GM18951 (cell line): ENCODE measurements at regions of chr1 and their contacts with region 1.

Region 1: GRCh38 chr1:45303582-45304310 is 22.9 kb upstream of the HPDL start:
- POLR2A ChIP-seq: peak; percentile 82

Region 2: DNA sequence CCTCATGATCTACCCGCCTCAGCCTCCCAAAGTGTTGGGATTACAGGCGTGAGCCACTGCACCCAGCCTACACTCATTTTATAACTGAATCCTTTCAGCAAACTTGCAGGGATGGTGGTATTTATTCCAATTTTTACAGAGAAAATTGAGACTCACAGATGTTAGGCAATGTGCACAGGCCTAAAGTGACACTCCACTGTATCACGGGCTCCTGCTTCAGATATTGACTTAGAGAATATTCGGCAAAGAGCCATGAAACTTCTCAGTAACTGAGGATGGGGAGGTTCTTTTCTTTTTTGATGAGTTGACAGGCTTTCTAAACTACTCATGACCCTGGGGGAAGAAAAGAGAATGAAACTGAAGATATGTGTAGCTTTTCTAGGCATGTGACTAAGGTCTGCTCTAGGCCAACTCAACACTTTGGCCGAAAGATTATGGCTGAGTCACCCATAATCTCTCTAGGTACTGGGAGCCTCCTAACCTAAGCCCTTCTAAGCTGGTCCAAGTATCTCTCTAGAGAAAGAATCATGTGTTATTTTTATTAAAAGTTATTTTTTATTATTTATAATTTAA is 440.8 kb before region 1 on chr1:
- in situ Hi-C with region 1: loop called (anchors 25 kb)
- POLR2A ChIP-seq: no peak

Region 3: DNA sequence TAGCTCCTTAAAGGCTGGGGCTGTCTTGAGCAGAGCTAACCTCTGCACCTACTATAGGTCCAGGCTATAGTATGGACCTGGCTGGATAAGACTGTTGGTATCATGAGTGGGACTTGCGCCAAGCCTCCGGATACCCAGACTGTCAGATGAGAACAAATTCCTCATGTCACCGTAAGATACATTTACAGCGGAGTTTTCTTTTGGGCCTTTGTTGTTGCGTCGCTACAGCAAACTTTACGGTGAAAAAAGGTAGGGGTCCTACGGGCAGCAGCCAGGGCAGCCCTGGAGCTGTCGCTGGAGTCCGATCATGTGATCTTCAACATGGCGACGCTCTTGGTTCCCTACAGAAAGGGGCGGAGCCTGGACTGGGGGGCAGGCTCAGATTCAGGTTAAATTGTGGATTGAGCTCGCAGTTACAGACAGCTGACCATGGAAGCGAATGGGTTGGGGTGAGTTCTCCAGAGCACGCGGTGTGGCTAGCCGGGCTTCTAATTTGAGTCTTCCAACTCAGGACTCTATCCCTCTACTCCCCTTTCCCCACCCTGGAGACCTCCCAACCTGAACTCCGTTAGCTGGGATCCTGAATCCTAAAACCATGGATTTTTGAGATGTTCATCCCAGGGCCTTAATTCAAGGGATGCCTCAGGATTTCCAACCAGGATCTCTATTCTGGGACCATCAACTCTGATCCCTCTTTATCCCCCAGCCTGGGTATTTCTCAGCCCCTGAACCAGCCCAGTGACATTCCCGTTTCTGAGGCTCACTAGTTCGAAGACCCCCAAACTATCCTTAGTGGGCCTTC is 291.7 kb before region 1 on chr1 and contains the start of gene UROD:
- in situ Hi-C with region 1: loop called (anchors 5 kb)
- POLR2A ChIP-seq: peak; percentile 76